T-cell (primary cell): ENCODE measurements at regions of chr1 and their contacts with region 1.

Region 1: GRCh38 chr1:27868932-27869718 is 3.2 kb upstream of the THEMIS2 start:
- DNase-seq: peak; percentile 39 to 85 (median 67)
- ATAC-seq: peak; percentile 73 to 85 (median 78)
- H3K4me3 ChIP-seq: peak overlapping the region; percentile 55 to 77
- H3K4me3 Mint-ChIP-seq: peak overlapping the region; percentile 68 to 82 (median 71)
- H3K27ac ChIP-seq: peak overlapping the region; percentile 87
- H3K27ac Mint-ChIP-seq: peak overlapping the region; percentile 98 to 100
- H3K4me1 ChIP-seq: peaks cover 24 to 75% of the 10 kb centered on the region in 2 experiments
- H3K4me1 Mint-ChIP-seq: peaks cover 38 to 63% (median 50%) of the 10 kb centered on the region in 3 donors
- H3K27me3 ChIP-seq: no peaks in the 10 kb centered on the region
- H3K27me3 Mint-ChIP-seq: no peaks in the 10 kb centered on the region

Region 2: GRCh38 chr1:27832762-27833161 is 36.4 kb before region 1 on chr1:
- CTCF ChIA-PET with region 1: no interaction called
- POLR2A ChIA-PET with region 1: no interaction called
- DNase-seq: no peak
- ATAC-seq: no peak
- H3K4me3 ChIP-seq: no peak overlapping the region
- H3K4me3 Mint-ChIP-seq: peak overlapping the region; percentile 44 to 97 (median 91)
- H3K27ac ChIP-seq: no peak overlapping the region
- H3K27ac Mint-ChIP-seq: no peak overlapping the region
- H3K4me1 ChIP-seq: peaks cover 14 to 19% of the 10 kb centered on the region in 2 experiments
- H3K4me1 Mint-ChIP-seq: peaks cover 12 to 47% (median 46%) of the 10 kb centered on the region in 3 donors
- H3K27me3 ChIP-seq: no peaks in the 10 kb centered on the region
- H3K27me3 Mint-ChIP-seq: no peaks in the 10 kb centered on the region

Region 3: DNA sequence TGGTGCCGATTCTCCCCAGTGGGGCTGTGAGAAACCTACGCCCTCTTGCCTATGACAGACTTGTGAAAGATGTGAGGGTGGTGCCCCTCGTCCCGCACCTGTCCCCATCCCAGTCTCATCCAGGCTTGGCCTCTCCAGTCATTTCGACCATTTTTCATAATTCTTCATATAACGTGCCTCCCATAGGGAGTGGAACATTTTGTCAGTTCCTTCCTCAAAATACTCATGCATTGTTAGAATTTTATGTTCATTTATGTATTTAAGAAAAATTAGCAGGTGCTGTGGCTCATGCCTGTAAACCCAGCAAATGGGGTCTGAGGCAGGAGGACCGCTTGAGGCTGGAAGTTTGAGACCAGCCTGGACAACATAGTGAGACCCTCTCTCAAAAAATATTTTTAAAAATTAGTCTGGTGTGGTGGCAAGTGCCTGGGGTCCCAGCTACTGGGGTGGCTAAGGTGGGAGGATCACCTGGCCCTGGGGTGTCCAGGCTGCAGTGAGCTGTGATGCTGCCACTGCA is 46.0 kb after region 1 on chr1:
- CTCF ChIA-PET with region 1: no interaction called
- POLR2A ChIA-PET with region 1: interaction called in 1 of 2 experiments, 10 read pairs
- DNase-seq: no peak
- ATAC-seq: no peak
- H3K4me3 ChIP-seq: peak overlapping the region in 1 of 2 donors; percentile 85
- H3K4me3 Mint-ChIP-seq: peak overlapping the region; percentile 98 to 100 (median 99)
- H3K27ac ChIP-seq: peak overlapping the region; percentile 94
- H3K27ac Mint-ChIP-seq: peak overlapping the region; percentile 92 to 97
- H3K4me1 ChIP-seq: peaks cover 4 to 23% of the 10 kb centered on the region in 2 experiments
- H3K4me1 Mint-ChIP-seq: peaks cover 21 to 25% (median 23%) of the 10 kb centered on the region in 3 donors
- H3K27me3 ChIP-seq: peaks cover 0 to 4% of the 10 kb centered on the region in 2 experiments
- H3K27me3 Mint-ChIP-seq: peaks cover 0 to 4% of the 10 kb centered on the region in 2 donors

Region 4: DNA sequence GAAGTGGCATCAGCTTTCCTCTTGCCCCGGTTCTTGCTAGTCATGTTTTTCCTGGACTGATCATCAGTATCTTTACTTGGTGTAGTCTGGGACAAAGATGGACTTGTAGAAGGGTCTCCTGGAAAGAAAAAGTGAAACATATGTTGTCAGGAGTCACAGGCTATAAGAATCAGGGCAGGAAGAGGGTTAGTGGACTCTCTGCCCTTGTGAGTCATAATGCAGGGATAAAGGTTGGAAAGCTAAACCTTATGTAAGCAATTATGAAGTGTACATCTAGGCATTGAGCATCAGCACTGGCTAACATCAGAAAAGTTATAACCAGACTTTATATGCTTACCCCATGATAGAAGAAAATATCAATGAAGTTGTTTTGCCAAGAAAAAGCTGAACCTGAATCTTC is 141.8 kb after region 1 on chr1:
- CTCF ChIA-PET with region 1: no interaction called
- POLR2A ChIA-PET with region 1: no interaction called
- DNase-seq: no peak
- ATAC-seq: no peak
- H3K4me3 ChIP-seq: no peak overlapping the region
- H3K4me3 Mint-ChIP-seq: no peak overlapping the region
- H3K27ac ChIP-seq: no peak overlapping the region
- H3K27ac Mint-ChIP-seq: no peak overlapping the region
- H3K4me1 ChIP-seq: no peaks in the 10 kb centered on the region
- H3K4me1 Mint-ChIP-seq: no peaks in the 10 kb centered on the region
- H3K27me3 ChIP-seq: no peaks in the 10 kb centered on the region
- H3K27me3 Mint-ChIP-seq: no peaks in the 10 kb centered on the region

Region 5: GRCh38 chr1:28021064-28021463 is 151.9 kb after region 1 on chr1:
- CTCF ChIA-PET with region 1: no interaction called
- POLR2A ChIA-PET with region 1: no interaction called
- DNase-seq: no peak
- ATAC-seq: no peak
- H3K4me3 ChIP-seq: no peak overlapping the region
- H3K4me3 Mint-ChIP-seq: no peak overlapping the region
- H3K27ac ChIP-seq: no peak overlapping the region
- H3K27ac Mint-ChIP-seq: peak overlapping the region in 1 of 2 donors; percentile 35
- H3K4me1 ChIP-seq: no peaks in the 10 kb centered on the region
- H3K4me1 Mint-ChIP-seq: no peaks in the 10 kb centered on the region
- H3K27me3 ChIP-seq: no peaks in the 10 kb centered on the region
- H3K27me3 Mint-ChIP-seq: no peaks in the 10 kb centered on the region